Panc1 (cell line): ENCODE measurements at regions of chr16 and their contacts with region 1.

Region 1: GRCh38 chr16:31286421-31287032 is 26.8 kb downstream of the ITGAM start:
- DNase-seq: no peak
- ATAC-seq: no peak
- H3K4me3 ChIP-seq: no peak overlapping the region
- H3K27ac ChIP-seq: no peak overlapping the region
- H3K4me1 ChIP-seq: no peaks in the 10 kb centered on the region
- H3K27me3 ChIP-seq: no peaks in the 10 kb centered on the region; the same call in 1 of the 2 replicates
- CTCF ChIP-seq: no peak

Region 2: GRCh38 chr16:31215287-31216162 is 71.0 kb before region 1 on chr16:
- CTCF ChIA-PET with region 1: no interaction called
- POLR2A ChIA-PET with region 1: no interaction called
- in situ Hi-C with region 1: no loop called
- intact Hi-C with region 1: loop called (anchors 10 kb)
- DNase-seq: no peak
- ATAC-seq: peak; percentile 93
- H3K4me3 ChIP-seq: peak overlapping the region; percentile 45 to 53
- H3K27ac ChIP-seq: no peak overlapping the region
- H3K4me1 ChIP-seq: peaks cover 7% of the 10 kb centered on the region; the same call in 1 of the 2 replicates
- H3K27me3 ChIP-seq: no peaks in the 10 kb centered on the region
- CTCF ChIP-seq: no peak

Region 3: GRCh38 chr16:31618130-31618529 is 331.6 kb after region 1 on chr16:
- CTCF ChIA-PET with region 1: no interaction called
- POLR2A ChIA-PET with region 1: no interaction called
- in situ Hi-C with region 1: no loop called
- intact Hi-C with region 1: no loop called
- DNase-seq: no peak
- ATAC-seq: no peak
- H3K4me3 ChIP-seq: no peak overlapping the region
- H3K27ac ChIP-seq: no peak overlapping the region
- H3K4me1 ChIP-seq: no peaks in the 10 kb centered on the region
- H3K27me3 ChIP-seq: no peaks in the 10 kb centered on the region
- CTCF ChIP-seq: no peak

Region 4: DNA sequence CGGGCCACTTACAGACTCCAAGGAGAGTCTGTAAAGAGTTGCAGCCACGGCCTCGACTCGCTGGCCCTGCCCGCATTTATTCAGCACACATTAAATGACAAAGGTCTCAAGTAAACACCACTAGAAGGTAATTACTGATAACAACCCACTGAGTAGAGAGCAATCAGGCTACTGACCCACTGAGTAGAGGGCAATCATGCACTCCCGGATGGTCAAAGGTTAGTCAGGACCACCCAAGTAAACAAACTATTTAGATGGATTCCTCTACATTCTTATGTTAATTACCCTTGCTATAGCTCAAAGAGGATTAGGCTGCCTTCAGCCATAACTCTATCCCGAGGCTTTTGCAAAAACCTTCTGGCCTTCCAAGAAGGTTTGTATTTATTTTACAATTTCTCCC is 556.3 kb after region 1 on chr16:
- CTCF ChIA-PET with region 1: no interaction called
- POLR2A ChIA-PET with region 1: no interaction called
- in situ Hi-C with region 1: no loop called
- intact Hi-C with region 1: no loop called
- DNase-seq: no peak
- ATAC-seq: no peak
- H3K4me3 ChIP-seq: no peak overlapping the region
- H3K27ac ChIP-seq: no peak overlapping the region
- H3K4me1 ChIP-seq: no peaks in the 10 kb centered on the region
- H3K27me3 ChIP-seq: 0 out of 2 replicates have a peak, but pooled peaks cover 2% of the 10 kb centered on the region
- CTCF ChIP-seq: no peak